Natural killer cell (primary cell): ENCODE measurements at regions of chr9 and their contacts with region 1.

Region 1: DNA sequence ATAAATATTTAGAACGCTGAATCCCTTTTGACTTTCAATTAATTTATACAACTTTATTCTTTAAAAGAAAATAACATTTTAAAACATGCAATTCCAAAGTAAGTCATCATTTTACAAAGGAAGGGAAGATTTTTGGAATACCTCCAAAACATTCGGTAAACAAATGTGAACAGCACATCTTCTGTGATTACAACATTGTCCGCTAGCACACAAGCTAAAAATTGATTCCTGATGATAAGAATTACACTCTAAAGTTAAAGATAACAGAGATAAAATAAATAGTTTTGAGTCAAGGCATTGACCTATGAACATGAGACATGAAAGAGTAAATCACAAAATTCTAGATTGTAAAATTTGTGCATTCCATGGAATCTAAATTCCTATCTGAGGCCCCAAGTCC is 56.2 kb upstream of the TRAF1 start:
- DNase-seq: no peak
- ATAC-seq: no peak
- H3K4me3 ChIP-seq: no peak overlapping the region
- H3K4me3 Mint-ChIP-seq: no peak overlapping the region
- H3K27ac ChIP-seq: no peak overlapping the region
- H3K27ac Mint-ChIP-seq: no peak overlapping the region
- H3K4me1 ChIP-seq: no peaks in the 10 kb centered on the region
- H3K4me1 Mint-ChIP-seq: no peaks in the 10 kb centered on the region
- H3K27me3 ChIP-seq: no peaks in the 10 kb centered on the region
- H3K27me3 Mint-ChIP-seq: peaks cover 0 to 5% of the 10 kb centered on the region in 2 donors
- CTCF ChIP-seq: no peak

Region 2: GRCh38 chr9:120755827-120756434 is 226.9 kb before region 1 on chr9:
- intact Hi-C with region 1: loop called (anchors 1 kb)
- DNase-seq: peak; percentile 51 to 85
- ATAC-seq: peak; percentile 69 to 85 (median 74)
- H3K4me3 ChIP-seq: no peak overlapping the region
- H3K4me3 Mint-ChIP-seq: no peak overlapping the region
- H3K27ac ChIP-seq: no peak overlapping the region
- H3K27ac Mint-ChIP-seq: peak overlapping the region in 1 of 2 donors; percentile 36
- H3K4me1 ChIP-seq: no peaks in the 10 kb centered on the region
- H3K4me1 Mint-ChIP-seq: peaks cover 0 to 5% of the 10 kb centered on the region in 2 donors
- H3K27me3 ChIP-seq: no peaks in the 10 kb centered on the region
- H3K27me3 Mint-ChIP-seq: no peaks in the 10 kb centered on the region
- CTCF ChIP-seq: peak; percentile 93

Region 3: DNA sequence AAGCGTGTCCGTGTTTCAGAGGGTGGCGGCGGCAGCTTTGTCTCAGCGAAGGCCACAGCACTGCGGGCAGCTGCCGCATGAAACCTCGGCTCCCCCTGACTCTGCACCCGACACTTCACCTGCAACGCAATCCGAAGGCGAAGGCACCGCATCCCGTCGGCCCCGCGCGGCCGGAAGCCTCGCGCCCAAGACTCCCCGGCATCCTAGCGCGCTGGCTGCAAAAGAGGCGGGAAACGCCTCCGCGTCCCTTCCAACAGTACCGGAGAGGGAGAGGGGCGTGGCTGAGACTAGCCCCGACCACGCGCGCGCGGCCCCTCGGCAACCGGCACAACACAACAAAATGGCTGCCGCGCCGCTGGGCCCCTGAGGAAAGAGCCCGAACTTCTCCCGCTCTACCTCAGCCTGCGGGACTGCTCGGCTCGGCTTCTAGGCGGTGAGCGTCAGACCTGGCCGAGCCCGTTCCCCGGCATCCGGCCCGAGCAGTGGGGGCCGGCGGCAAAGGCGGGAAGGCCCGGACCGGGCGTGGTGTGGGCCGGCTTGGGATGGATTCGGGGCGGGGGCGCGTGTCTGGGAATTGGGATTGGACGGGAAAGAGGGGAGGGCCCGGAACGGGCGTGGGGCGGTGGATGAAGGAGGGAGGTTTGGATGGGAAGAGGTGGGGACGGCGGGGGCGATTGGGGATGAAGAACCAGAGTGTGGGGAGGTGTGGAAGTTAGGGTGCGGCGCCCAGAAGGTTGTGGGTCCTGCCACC is 92.0 kb after region 1 on chr9 and contains the start of gene CNTRL:
- intact Hi-C with region 1: loop called (anchors 1 kb)
- DNase-seq: peak; percentile 73 to 91
- ATAC-seq: peak; percentile 83 to 88 (median 88)
- H3K4me3 ChIP-seq: peak within 1 kb of the TSS; percentile 84
- H3K4me3 Mint-ChIP-seq: peak within 1 kb of the TSS; percentile 100
- H3K27ac ChIP-seq: peak within 1 kb of the TSS; percentile 77
- H3K27ac Mint-ChIP-seq: peak within 1 kb of the TSS; percentile 94 to 95
- H3K4me1 ChIP-seq: peaks cover 20% of the 10 kb centered on the region
- H3K4me1 Mint-ChIP-seq: peaks cover 44 to 46% of the 10 kb centered on the region in 2 donors
- H3K27me3 ChIP-seq: no peaks in the 10 kb centered on the region
- H3K27me3 Mint-ChIP-seq: no peaks in the 10 kb centered on the region
- CTCF ChIP-seq: no peak
- total RNA-seq, gene CNTRL: 59.1 to 74.3 (median 60.0) TPM

Region 4: DNA sequence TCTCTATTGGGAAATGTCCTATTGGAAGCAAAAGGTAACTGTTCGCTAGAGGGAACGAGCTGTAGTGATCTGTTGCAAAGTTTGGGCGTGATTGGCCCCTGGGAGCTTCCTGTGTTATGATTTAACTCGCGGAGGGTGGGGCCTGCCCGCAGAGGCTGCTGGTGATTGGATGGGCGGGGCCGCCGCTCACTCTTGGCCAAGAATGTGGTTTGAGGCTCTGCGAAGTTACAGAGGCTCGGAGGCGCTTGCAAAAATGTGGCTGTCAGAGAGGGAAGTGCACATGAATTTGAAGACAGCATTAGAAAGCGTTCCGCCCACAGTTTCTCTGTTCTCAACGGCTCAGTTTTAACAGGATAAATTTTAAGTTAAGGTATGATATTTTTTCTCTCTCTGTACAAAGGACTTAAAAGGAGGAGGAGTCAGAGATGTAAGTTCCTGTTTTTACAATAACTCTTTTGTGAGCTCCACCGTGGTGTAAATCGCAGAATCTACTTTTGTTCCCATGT is 138.8 kb after region 1 on chr9:
- intact Hi-C with region 1: loop called (anchors 5 kb)
- DNase-seq: peak; percentile 94 to 97
- ATAC-seq: peak; percentile 98 to 100 (median 100)
- H3K4me3 ChIP-seq: peak overlapping the region; percentile 46
- H3K4me3 Mint-ChIP-seq: peak overlapping the region; percentile 98
- H3K27ac ChIP-seq: peak overlapping the region; percentile 65
- H3K27ac Mint-ChIP-seq: peak overlapping the region; percentile 90 to 98
- H3K4me1 ChIP-seq: peaks cover 3% of the 10 kb centered on the region
- H3K4me1 Mint-ChIP-seq: peaks cover 36 to 40% of the 10 kb centered on the region in 2 donors
- H3K27me3 ChIP-seq: no peaks in the 10 kb centered on the region
- H3K27me3 Mint-ChIP-seq: no peaks in the 10 kb centered on the region
- CTCF ChIP-seq: no peak

Region 5: GRCh38 chr9:121399883-121400607 is 417.2 kb after region 1 on chr9:
- intact Hi-C with region 1: loop called (anchors 5 kb)
- DNase-seq: peak in 1 of 2 donors; percentile 83
- ATAC-seq: peak; percentile 54 to 65 (median 64)
- H3K4me3 ChIP-seq: no peak overlapping the region
- H3K4me3 Mint-ChIP-seq: no peak overlapping the region
- H3K27ac ChIP-seq: no peak overlapping the region
- H3K27ac Mint-ChIP-seq: no peak overlapping the region
- H3K4me1 ChIP-seq: no peaks in the 10 kb centered on the region
- H3K4me1 Mint-ChIP-seq: no peaks in the 10 kb centered on the region
- H3K27me3 ChIP-seq: no peaks in the 10 kb centered on the region
- H3K27me3 Mint-ChIP-seq: no peaks in the 10 kb centered on the region
- CTCF ChIP-seq: peak; percentile 86